ENCODE measurements at regions of chr18 and their contacts with region 1.

Region 1: DNA sequence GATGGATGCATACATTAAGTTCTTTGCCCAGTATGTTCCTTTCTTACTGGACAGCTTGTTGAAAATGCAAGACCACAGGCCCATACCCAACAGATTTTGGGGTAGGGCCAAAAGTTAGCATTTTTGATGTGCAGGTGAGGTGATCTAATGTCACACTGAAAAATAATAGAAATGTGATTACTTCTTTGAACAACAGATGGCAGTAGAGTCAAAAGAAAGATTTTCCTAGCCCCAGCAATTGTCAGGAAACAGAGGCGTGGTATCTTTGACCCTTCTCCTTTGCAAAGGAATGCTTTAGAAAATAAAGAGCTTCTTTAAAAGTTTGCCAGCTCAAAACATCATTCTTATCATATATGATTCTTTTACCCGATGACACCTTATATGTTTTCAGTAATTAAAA is 343.6 kb upstream of the SYT4 start:
- DNase-seq: no peak
- H3K4me3 Mint-ChIP-seq: no peak overlapping the region
- H3K27ac Mint-ChIP-seq: no peak overlapping the region
- H3K4me1 Mint-ChIP-seq: no peaks in the 10 kb centered on the region
- H3K27me3 Mint-ChIP-seq: no peaks in the 10 kb centered on the region

Region 2: DNA sequence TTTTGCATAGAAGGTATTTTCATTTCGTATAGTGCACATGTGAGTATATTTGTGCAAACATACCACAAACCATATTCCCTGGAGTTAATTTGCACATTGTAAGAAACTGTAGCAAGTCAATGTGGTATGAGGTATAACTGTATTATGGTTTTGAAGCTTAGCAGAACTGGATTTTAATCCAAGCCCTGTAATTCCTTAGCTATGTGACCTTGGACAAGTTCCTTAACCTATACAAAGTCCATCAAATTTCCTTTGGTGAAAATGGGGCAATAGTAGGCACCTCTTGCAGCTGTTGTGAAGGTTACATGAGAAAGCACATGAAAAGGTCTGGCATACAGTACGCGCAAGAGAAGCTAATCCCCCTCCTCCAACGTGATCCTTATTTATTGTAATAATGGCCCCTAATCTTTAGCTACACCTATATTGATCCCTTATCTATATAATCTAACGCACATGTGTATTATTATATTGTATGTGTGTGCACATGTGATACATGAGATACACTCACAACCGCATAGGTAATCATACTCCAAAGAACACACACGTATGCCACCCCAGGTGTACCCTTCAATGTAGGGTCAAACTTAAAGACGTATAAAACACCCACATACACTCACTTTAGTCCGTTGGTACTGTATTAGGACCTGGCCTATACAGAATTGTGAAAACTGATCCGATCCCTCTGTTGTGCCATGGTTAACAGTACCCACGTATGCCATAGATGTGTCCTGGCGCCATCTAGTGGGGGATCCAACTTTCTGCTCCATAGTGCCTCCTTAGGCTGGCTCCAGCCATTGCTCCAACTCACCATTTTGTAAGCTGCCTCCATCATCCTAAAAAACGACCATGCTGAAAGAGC is 1591.5 kb after region 1 on chr18:
- CTCF ChIA-PET with region 1: interaction called, 10 read pairs
- DNase-seq: peak; percentile 81
- H3K4me3 Mint-ChIP-seq: no peak overlapping the region
- H3K27ac Mint-ChIP-seq: no peak overlapping the region
- H3K4me1 Mint-ChIP-seq: no peaks in the 10 kb centered on the region
- H3K27me3 Mint-ChIP-seq: peaks cover 4% of the 10 kb centered on the region

Region 3: DNA sequence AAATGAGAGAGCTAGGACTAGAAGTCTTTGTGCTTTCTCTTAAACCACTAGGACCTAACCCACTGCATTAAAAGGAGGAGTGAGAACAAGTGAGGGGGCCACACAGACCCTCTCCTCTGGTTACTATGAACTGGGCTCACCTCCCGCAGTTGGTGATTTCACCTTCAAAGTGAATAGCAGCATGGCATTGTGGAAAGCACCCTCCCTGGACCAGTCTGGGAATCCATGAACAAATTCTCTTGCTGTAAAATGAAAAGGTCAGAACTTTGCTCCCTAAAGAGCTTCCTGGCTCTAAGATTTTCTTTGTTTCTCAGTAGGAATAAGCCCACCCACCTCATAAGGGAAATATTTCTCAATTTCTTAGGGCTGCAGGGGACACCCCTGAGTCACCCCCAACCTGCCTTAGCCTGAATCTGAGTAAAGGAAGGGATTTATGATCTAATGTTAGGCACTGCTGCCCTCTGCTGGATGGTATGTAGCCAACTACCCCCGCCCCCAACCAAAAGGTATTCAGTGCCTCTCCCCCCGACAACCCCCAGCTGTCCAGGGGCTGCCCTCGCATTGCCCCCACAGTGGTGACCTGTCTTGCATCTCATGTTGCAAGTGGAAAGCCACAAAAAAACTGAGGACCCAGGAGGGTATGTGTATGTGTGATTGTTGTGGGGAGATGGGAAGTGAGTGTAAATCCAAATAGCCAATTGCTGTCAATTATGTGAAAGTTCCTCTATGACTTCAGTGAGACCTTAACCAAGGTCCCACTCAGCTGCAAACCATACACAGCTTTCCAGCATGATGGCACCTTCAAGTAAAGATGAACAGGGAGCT is 1763.4 kb after region 1 on chr18:
- CTCF ChIA-PET with region 1: interaction called, 12 read pairs
- DNase-seq: peak; percentile 50
- H3K4me3 Mint-ChIP-seq: no peak overlapping the region
- H3K27ac Mint-ChIP-seq: no peak overlapping the region
- H3K4me1 Mint-ChIP-seq: no peaks in the 10 kb centered on the region
- H3K27me3 Mint-ChIP-seq: peaks cover 4% of the 10 kb centered on the region